Heart left ventricle (tissue), 16 donors: ENCODE measurements at regions of chr20 and their contacts with region 1.

Region 1: DNA sequence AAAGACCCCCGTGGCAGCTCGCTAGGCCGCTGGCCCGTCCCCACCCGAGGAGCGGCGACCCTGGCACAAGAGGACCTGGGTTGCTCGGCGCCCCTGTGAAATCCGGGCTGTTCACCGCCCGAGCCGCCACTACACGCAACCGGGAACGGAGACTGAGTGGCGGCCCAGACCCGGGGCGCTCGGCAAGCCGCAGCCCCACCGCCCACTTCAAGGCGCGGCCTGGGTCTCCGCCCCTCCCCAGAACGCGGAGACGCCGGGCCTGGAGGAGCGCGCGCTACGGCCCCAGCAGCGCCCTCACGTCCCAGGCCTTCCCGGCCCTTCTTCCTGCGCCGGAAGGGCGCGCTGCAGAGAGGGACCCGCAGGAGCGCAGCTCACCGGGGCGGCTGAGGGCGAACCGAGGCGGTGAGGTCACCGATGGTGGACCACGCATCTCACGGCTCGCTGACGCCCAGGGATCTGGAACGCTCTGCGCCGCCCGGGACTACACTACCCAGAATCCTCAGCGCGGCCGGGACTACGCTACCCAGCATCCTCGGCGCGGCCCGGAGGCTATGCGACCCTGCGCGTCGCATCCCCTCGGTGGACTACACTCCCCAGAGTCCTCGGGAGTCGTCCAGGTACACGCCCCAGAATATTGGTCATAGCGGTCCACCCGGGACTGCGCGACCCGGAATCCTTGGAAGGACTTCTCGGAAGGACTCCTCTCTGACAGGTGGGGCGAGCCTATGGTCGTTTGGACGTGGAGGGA is at the start of gene ZNF337:
- DNase-seq: peak; percentile 96 to 98 (median 97)
- ATAC-seq: peak; percentile 100
- H3K4me3 ChIP-seq: peak within 1 kb of the TSS; percentile 73 to 98 (median 89)
- H3K27ac ChIP-seq: peak within 1 kb of the TSS; percentile 69 to 97 (median 93)
- H3K4me1 ChIP-seq: peaks cover 0 to 22% (median 14%) of the 10 kb centered on the region in 12 donors
- H3K27me3 ChIP-seq: no peaks in the 10 kb centered on the region
- CTCF ChIP-seq: peak in 5 of 12 donors; percentile 13 to 39 (median 22)
- POLR2A ChIP-seq: peak; percentile 22 to 84
- total RNA-seq, gene ZNF337: 5.8 to 10.3 (median 6.6) TPM

Region 2: GRCh38 chr20:25623736-25624499 is 72.6 kb before region 1 on chr20 and contains the start of gene NANP:
- intact Hi-C with region 1: loop called in 6 of 10 experiments (anchors 1 to 10 kb)
- DNase-seq: peak; percentile 95 to 98 (median 97)
- ATAC-seq: peak; percentile 94 to 97 (median 96)
- H3K4me3 ChIP-seq: peak within 1 kb of the TSS; percentile 72 to 99 (median 84)
- H3K27ac ChIP-seq: peak within 1 kb of the TSS; percentile 53 to 97 (median 87)
- H3K4me1 ChIP-seq: peaks cover 0 to 23% (median 15%) of the 10 kb centered on the region in 12 donors
- H3K27me3 ChIP-seq: no peaks in the 10 kb centered on the region
- CTCF ChIP-seq: peak in 2 of 12 donors; percentile 4 to 9
- POLR2A ChIP-seq: peak in 1 of 2 donors; percentile 71
- total RNA-seq, gene NANP: 2.5 to 4.4 (median 3.1) TPM

Region 3: DNA sequence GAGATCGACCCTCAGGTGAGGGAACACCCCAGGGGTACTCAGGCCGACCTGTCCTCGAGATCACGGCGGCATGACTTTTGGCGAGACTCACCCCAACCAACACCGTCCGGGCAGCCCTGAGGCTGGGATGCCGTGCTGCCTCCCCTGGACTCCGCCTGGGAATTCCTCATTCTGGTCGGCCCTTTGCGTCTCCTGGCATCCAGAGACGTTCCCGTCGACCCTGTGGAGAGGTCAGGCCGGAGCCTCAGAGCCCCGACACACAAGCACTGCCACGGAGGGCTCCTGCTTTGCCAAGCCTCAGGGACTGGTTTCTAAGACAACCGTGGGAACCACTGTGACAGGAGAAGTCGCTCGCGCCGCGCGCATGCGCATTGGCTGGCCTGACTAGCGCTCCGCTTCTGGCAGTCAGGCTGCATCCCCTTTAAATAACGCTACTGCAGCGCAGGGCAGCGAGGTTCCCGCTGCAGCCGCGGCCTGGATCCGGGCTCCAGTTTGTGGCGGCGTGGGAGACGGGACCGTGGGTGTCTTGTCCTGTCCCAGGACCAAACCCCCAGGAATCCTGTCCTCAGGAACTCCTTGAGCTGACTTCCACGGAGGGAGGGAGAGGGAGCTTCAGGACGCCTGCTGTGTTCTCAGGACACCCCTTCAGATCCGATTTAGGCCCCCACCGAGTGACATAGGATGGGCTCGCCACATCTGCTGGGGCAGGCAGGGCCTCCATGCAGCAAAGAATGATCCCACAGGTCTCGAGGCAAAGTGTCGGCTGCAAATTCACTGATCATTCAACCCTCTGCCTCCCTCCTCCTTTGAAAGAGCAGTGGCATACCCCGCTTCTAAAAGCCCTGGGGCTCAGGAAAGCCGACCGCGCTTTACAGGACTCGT is 163.3 kb after region 1 on chr20:
- intact Hi-C with region 1: loop called in 3 of 10 experiments (anchors 2 to 5 kb)
- DNase-seq: peak; percentile 75 to 91 (median 85)
- ATAC-seq: peak; percentile 42 to 72 (median 62)
- H3K4me3 ChIP-seq: peak overlapping the region in 10 of 12 donors; percentile 16 to 58 (median 38)
- H3K27ac ChIP-seq: no peak overlapping the region
- H3K4me1 ChIP-seq: peaks cover 0 to 56% (median 24%) of the 10 kb centered on the region in 12 donors
- H3K27me3 ChIP-seq: peaks cover 0 to 27% (median 0%) of the 10 kb centered on the region in 9 donors
- CTCF ChIP-seq: no peak
- POLR2A ChIP-seq: no peak

Region 4: GRCh38 chr20:25865380-25866118 is 169.0 kb after region 1 on chr20:
- intact Hi-C with region 1: loop called in 3 of 10 experiments (anchors 2 to 5 kb)
- DNase-seq: peak; percentile 76 to 91 (median 86)
- ATAC-seq: peak in 3 of 4 donors; percentile 52 to 59 (median 58)
- H3K4me3 ChIP-seq: peak overlapping the region; percentile 2 to 61 (median 48)
- H3K27ac ChIP-seq: peak overlapping the region in 3 of 12 donors; percentile 25 to 53 (median 47)
- H3K4me1 ChIP-seq: peaks cover 0 to 58% (median 20%) of the 10 kb centered on the region in 12 donors
- H3K27me3 ChIP-seq: peaks cover 0 to 9% (median 0%) of the 10 kb centered on the region in 9 donors
- CTCF ChIP-seq: peak in 1 of 12 donors; percentile 18
- POLR2A ChIP-seq: peak in 1 of 2 donors; percentile 16